Naive thymus-derived CD4-positive, alpha-beta T cell (primary cell): ENCODE measurements at regions of chr6 and their contacts with region 1.

Region 1: DNA sequence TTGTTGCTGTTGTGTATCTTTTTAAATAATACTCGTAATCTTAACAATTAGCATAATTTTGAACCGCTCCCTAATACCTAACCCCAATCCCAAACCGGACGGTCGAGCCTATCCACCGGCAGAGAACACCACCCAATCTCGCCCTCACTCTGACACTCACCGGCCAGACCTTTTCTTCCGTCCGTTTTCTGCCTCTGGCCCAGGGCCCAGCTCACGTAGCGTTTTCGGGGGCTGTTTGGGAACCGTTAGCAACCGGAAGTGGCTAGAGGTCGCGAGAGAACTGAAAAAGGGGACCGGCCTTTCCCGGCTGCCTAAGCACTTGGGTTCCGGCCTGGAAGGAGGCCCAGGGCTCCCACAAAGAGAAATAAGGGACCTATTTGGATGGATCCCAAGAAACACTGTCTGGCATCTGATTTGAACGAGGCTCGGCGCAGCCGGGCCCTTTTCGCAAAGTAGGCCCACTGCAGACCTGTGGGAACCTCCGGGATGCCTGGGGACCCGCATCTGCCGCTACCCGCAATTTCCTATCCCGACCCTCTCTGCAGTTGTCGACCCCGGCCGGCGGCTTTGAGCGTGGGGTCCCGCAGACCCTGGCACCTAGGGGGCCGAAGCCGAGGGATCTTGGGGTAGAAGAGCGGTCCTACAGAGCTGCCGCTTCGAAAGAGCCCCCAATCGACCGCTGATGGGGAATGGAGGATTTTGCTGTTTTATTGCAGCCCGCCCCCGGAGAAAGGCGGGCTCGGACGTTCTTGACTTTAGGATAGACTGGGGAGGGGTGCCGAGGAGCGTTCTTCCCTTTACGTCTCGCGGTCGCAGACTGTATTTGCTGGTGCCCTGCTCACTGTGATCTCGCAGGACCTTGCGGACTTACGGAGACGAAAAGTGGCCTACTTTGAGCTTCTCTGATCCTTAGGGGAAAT is 4.8 kb upstream of the ZKSCAN8 start:
- DNase-seq: peak; percentile 45 to 72 (median 56)
- ATAC-seq: peak; percentile 56
- H3K4me3 ChIP-seq: peak overlapping the region; percentile 89
- H3K4me3 Mint-ChIP-seq: peak overlapping the region; percentile 91 to 100 (median 94)
- H3K27ac ChIP-seq: peak overlapping the region; percentile 98
- H3K27ac Mint-ChIP-seq: peak overlapping the region; percentile 91 to 100 (median 97)
- H3K4me1 ChIP-seq: peaks cover 10 to 19% of the 10 kb centered on the region in 2 donors
- H3K4me1 Mint-ChIP-seq: peaks cover 31 to 78% (median 72%) of the 10 kb centered on the region in 7 donors
- H3K27me3 ChIP-seq: no peaks in the 10 kb centered on the region
- H3K27me3 Mint-ChIP-seq: no peaks in the 10 kb centered on the region

Region 2: GRCh38 chr6:27177485-27178406 is 959.1 kb before region 1 on chr6:
- CTCF ChIA-PET with region 1: no interaction called
- POLR2A ChIA-PET with region 1: no interaction called
- intact Hi-C with region 1: loop called in 1 of 2 experiments (anchors 10 kb)
- DNase-seq: peak; percentile 49 to 78 (median 66)
- ATAC-seq: peak; percentile 83
- H3K4me3 ChIP-seq: peak overlapping the region; percentile 99
- H3K4me3 Mint-ChIP-seq: peak overlapping the region; percentile 90 to 98 (median 96)
- H3K27ac ChIP-seq: peak overlapping the region; percentile 74
- H3K27ac Mint-ChIP-seq: peak overlapping the region; percentile 79 to 100 (median 95)
- H3K4me1 ChIP-seq: peaks cover 0 to 3% of the 10 kb centered on the region in 2 donors
- H3K4me1 Mint-ChIP-seq: peaks cover 0 to 33% (median 14%) of the 10 kb centered on the region in 7 donors
- H3K27me3 ChIP-seq: no peaks in the 10 kb centered on the region
- H3K27me3 Mint-ChIP-seq: peaks cover 0 to 37% (median 0%) of the 10 kb centered on the region in 5 donors

Region 3: DNA sequence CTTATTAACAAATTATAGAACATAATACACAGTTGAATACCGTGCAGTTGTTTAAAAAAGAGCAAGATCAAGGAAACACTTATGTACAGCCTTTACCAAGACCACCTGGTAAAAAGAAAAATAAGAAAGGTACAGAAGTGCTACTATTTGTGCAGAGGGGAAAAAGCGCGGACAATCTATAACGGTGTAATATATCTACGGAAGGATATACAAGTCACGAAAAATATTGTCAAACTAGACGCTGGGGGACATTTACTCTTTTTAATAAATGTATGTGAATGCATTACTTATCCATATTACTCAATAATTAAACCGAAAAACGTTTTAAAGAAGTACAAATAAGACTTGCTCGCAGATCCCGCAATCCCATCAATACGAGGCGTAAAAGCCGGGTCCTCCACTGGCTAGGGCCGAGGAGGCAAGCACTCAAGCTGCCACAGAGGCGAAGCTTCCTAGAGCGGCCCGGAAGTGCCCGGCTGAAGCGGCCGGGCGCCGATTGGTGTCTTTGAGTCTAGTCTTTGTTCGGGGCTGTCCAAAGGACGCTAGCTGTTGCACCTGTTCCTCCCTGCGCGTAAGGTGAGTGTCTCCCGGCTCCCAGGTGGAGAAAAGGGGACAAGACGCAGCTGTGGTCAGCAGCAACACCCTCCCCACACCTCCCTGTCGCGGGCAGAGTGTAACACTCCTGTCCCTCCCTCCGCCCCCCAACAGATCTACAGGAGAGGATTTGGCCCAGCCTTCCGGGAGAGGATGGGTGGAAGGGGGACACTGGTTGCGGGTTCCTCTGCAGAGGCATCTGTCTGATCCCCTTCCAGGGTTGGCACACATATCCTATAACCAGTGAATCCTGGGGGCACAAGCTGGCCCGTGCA is 12.5 kb before region 1 on chr6 and contains the start of gene ZSCAN16:
- CTCF ChIA-PET with region 1: interaction called, 6 read pairs
- POLR2A ChIA-PET with region 1: interaction called, 75 read pairs
- intact Hi-C with region 1: loop called (anchors 1 kb)
- DNase-seq: peak; percentile 43 to 72 (median 59)
- ATAC-seq: peak; percentile 86
- H3K4me3 ChIP-seq: peak within 1 kb of the TSS; percentile 86
- H3K4me3 Mint-ChIP-seq: peak within 1 kb of the TSS; percentile 80 to 98 (median 95)
- H3K27ac ChIP-seq: peak within 1 kb of the TSS; percentile 93
- H3K27ac Mint-ChIP-seq: peak within 1 kb of the TSS; percentile 83 to 99 (median 96)
- H3K4me1 ChIP-seq: peaks cover 12 to 16% of the 10 kb centered on the region in 2 donors
- H3K4me1 Mint-ChIP-seq: peaks cover 35 to 54% (median 48%) of the 10 kb centered on the region in 7 donors
- H3K27me3 ChIP-seq: no peaks in the 10 kb centered on the region
- H3K27me3 Mint-ChIP-seq: no peaks in the 10 kb centered on the region
- total RNA-seq, gene ZSCAN16: 6.4 to 13.9 (median 7.6) TPM

Region 4: GRCh38 chr6:28252009-28252975 is 115.4 kb after region 1 on chr6 and contains the start of gene ZKSCAN4:
- CTCF ChIA-PET with region 1: interaction called, 6 read pairs
- POLR2A ChIA-PET with region 1: interaction called, 14 read pairs
- intact Hi-C with region 1: loop called (anchors 1 kb)
- DNase-seq: peak; percentile 44 to 86 (median 78)
- ATAC-seq: peak; percentile 96
- H3K4me3 ChIP-seq: peak within 1 kb of the TSS; percentile 100
- H3K4me3 Mint-ChIP-seq: peak within 1 kb of the TSS; percentile 84 to 100 (median 98)
- H3K27ac ChIP-seq: peak within 1 kb of the TSS; percentile 55
- H3K27ac Mint-ChIP-seq: peak within 1 kb of the TSS; percentile 85 to 98 (median 92)
- H3K4me1 ChIP-seq: peaks cover 14 to 18% of the 10 kb centered on the region in 2 donors
- H3K4me1 Mint-ChIP-seq: peaks cover 21 to 53% (median 39%) of the 10 kb centered on the region in 7 donors
- H3K27me3 ChIP-seq: no peaks in the 10 kb centered on the region
- H3K27me3 Mint-ChIP-seq: peaks cover 0 to 4% (median 0%) of the 10 kb centered on the region in 5 donors
- total RNA-seq, gene ZKSCAN4: 2.8 to 11.8 (median 8.7) TPM

Region 5: GRCh38 chr6:28303570-28303969 is 166.7 kb after region 1 on chr6:
- CTCF ChIA-PET with region 1: no interaction called
- POLR2A ChIA-PET with region 1: no interaction called
- intact Hi-C with region 1: no loop called
- DNase-seq: no peak
- ATAC-seq: no peak
- H3K4me3 ChIP-seq: no peak overlapping the region
- H3K4me3 Mint-ChIP-seq: peak overlapping the region in 2 of 10 donors; percentile 3 to 12
- H3K27ac ChIP-seq: no peak overlapping the region
- H3K27ac Mint-ChIP-seq: no peak overlapping the region
- H3K4me1 ChIP-seq: peaks cover 0 to 2% of the 10 kb centered on the region in 2 donors
- H3K4me1 Mint-ChIP-seq: peaks cover 0 to 13% (median 4%) of the 10 kb centered on the region in 7 donors
- H3K27me3 ChIP-seq: no peaks in the 10 kb centered on the region
- H3K27me3 Mint-ChIP-seq: peaks cover 5 to 14% (median 8%) of the 10 kb centered on the region in 5 donors

Region 6: DNA sequence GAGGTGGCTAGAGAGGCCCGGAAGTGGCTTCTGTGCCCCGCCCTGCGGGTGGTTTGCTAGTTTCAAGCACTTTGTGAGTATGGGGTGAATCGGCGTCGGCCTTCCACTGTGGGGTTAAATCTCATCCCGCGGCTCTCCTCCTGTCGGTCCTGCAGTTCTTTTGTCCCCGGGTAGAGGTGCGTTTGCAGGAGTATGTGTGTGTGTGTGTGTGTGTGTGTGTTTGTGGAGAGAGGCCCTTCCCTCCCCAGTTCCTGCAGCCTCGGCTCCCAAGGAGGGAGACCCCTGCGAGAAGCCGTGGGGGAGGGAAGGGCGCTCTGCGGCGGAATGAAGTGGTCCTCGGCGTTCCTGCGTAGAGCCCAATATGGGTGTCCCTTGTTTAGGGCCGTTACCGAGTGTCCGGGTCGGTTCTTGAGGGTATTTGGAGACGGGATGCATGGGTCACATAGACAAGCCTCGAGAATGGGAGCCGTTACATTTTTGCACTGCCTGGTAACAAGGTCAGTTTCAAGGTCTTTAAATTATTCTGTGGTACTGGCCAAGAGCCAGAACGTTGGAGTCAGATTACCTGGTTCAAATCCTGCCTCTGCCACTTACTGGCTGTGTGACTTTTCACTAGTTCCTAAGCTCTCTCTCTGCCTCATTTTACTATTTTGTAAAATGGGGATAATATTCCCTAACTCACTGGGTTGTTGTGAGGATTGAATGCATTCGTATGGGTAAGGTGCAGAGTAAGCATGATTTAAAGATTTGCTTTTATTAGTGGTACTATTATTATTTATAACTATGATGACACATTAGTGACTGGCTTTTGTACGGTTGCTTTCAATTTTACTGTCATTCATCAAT is 213.3 kb after region 1 on chr6 and contains the start of gene ZKSCAN3:
- CTCF ChIA-PET with region 1: interaction called, 4 read pairs
- POLR2A ChIA-PET with region 1: interaction called, 3 read pairs
- intact Hi-C with region 1: loop called in 1 of 2 experiments (anchors 1 kb)
- DNase-seq: peak; percentile 53 to 83 (median 80)
- ATAC-seq: peak; percentile 98
- H3K4me3 ChIP-seq: peak within 1 kb of the TSS; percentile 80
- H3K4me3 Mint-ChIP-seq: peak within 1 kb of the TSS; percentile 94 to 100 (median 98)
- H3K27ac ChIP-seq: peak within 1 kb of the TSS; percentile 75
- H3K27ac Mint-ChIP-seq: peak within 1 kb of the TSS; percentile 90 to 97 (median 94)
- H3K4me1 ChIP-seq: peaks cover 0 to 7% of the 10 kb centered on the region in 2 donors
- H3K4me1 Mint-ChIP-seq: peaks cover 28 to 39% (median 35%) of the 10 kb centered on the region in 7 donors
- H3K27me3 ChIP-seq: peaks cover 0 to 4% of the 10 kb centered on the region in 2 donors
- H3K27me3 Mint-ChIP-seq: peaks cover 11 to 30% (median 12%) of the 10 kb centered on the region in 5 donors
- total RNA-seq, gene ZKSCAN3: 3.3 to 13.2 (median 5.8) TPM

Region 7: GRCh38 chr6:28443112-28443773 is 306.4 kb after region 1 on chr6 and contains the start of gene ZSCAN23:
- CTCF ChIA-PET with region 1: no interaction called
- POLR2A ChIA-PET with region 1: no interaction called
- intact Hi-C with region 1: loop called (anchors 2 to 5 kb)
- DNase-seq: peak; percentile 59 to 93 (median 88)
- ATAC-seq: peak; percentile 96
- H3K4me3 ChIP-seq: peak within 1 kb of the TSS; percentile 76
- H3K4me3 Mint-ChIP-seq: peak within 1 kb of the TSS; percentile 86 to 98 (median 96)
- H3K27ac ChIP-seq: peak within 1 kb of the TSS; percentile 60
- H3K27ac Mint-ChIP-seq: peak within 1 kb of the TSS; percentile 76 to 97 (median 93)
- H3K4me1 ChIP-seq: peaks cover 13 to 16% of the 10 kb centered on the region in 2 donors
- H3K4me1 Mint-ChIP-seq: peaks cover 15 to 38% (median 32%) of the 10 kb centered on the region in 7 donors
- H3K27me3 ChIP-seq: peaks cover 0 to 6% of the 10 kb centered on the region in 2 donors
- H3K27me3 Mint-ChIP-seq: peaks cover 9 to 36% (median 30%) of the 10 kb centered on the region in 5 donors
- total RNA-seq, gene ZSCAN23: 1.4 to 3.4 (median 2.4) TPM

Region 8: DNA sequence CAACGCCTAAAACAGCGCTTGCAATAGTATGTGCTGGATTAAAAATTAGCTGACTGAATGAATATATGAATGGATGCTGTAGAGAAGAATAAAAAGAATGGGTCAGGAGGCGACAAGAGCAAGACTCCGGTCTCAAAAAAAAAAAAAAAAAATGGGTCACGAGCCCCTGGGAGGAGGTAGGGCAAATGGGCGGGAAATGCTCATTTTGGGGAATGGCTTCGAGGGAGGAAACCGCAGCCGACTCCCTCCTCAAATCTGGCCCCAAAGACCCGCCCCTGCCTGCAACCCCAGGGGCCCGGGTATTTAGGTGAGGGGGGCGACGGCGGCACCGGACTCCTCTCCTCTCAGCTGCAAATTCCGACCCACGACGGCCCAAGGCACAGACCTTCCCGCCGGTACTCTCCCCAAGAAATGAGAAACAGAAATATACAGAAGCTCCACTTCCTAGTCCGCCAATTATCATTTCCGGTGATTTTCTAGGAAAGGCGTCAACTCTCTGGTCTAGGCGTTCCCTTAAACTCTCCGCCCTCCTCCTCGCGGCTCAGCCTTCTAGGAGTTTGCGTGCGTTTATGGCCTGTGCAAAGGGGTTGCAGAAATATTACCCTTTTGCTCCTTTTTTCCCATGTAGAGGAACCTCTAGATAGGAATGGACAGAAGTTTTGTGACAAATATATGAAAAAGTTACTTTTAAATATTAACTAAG is 868.5 kb after region 1 on chr6 and contains the start of gene ZNF311:
- CTCF ChIA-PET with region 1: no interaction called
- POLR2A ChIA-PET with region 1: no interaction called
- intact Hi-C with region 1: loop called in 1 of 2 experiments (anchors 10 kb)
- DNase-seq: peak in 6 of 9 donors; percentile 18 to 56 (median 38)
- ATAC-seq: peak; percentile 85
- H3K4me3 ChIP-seq: peak within 1 kb of the TSS; percentile 51
- H3K4me3 Mint-ChIP-seq: peak within 1 kb of the TSS; percentile 87 to 100 (median 95)
- H3K27ac ChIP-seq: peak within 1 kb of the TSS; percentile 66
- H3K27ac Mint-ChIP-seq: peak within 1 kb of the TSS; percentile 60 to 94 (median 86)
- H3K4me1 ChIP-seq: peaks cover 4 to 7% of the 10 kb centered on the region in 2 donors
- H3K4me1 Mint-ChIP-seq: peaks cover 16 to 27% (median 21%) of the 10 kb centered on the region in 7 donors
- H3K27me3 ChIP-seq: peaks cover 0 to 7% of the 10 kb centered on the region in 2 donors
- H3K27me3 Mint-ChIP-seq: peaks cover 0 to 17% (median 3%) of the 10 kb centered on the region in 5 donors
- total RNA-seq, gene ZNF311: 0.22 to 0.73 (median 0.57) TPM